Activated CD4-positive, alpha-beta T cell treated with anti-CD3 and anti-CD28 coated beads, Interleukin-2, amount 10 ng/mL, durations not matched to agents 7 days and 5 days (primary cell): ENCODE measurements at regions of chr9 and their contacts with region 1.

Region 1: GRCh38 chr9:128887914-128888350 is 6.0 kb downstream of the LRRC8A start:
- DNase-seq: no peak
- H3K4me3 Mint-ChIP-seq: no peak overlapping the region
- H3K27ac Mint-ChIP-seq: no peak overlapping the region
- H3K4me1 Mint-ChIP-seq: peaks cover 71% of the 10 kb centered on the region
- H3K27me3 Mint-ChIP-seq: no peaks in the 10 kb centered on the region

Region 2: DNA sequence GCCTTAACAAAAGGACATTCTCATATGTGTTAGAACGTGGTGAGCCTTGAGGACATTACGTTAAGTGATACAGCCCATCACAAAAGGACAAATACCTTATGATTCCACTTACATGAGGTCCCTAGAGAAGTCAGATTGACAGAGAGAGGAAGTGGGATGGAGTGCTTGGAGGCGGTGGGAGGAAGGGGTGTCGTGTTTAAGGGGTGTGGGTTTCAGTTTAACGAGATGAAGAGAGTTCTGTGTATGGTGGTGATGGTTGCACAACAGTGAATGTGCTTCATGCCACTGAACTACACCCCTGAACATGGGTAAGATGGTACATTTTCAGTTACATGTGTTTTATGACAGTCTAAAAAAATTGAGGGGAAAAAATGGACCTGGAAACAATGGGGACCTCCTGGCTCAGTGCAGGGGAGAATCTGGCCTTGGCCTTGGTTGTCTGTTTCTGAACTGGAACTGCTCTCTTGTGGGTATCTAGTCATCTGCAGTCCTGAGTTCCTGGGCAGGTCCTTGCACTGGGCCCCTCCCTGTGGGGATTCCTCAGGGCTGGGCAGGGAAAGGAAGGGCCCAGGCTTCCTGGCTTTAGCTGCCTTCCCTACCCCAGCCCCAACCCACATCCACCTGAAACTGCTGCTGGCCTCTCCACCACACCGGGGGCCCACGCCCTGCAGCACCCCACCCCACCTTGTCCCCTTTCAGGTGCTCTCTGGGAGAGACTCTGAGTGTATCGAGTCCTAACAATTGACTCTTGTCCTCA is 11.8 kb after region 1 on chr9:
- CTCF ChIA-PET with region 1: interaction called, 12 read pairs
- POLR2A ChIA-PET with region 1: interaction called, 3 read pairs
- DNase-seq: peak; percentile 47
- H3K4me3 Mint-ChIP-seq: peak overlapping the region; percentile 58
- H3K27ac Mint-ChIP-seq: peak overlapping the region; percentile 97
- H3K4me1 Mint-ChIP-seq: peaks cover 93% of the 10 kb centered on the region
- H3K27me3 Mint-ChIP-seq: no peaks in the 10 kb centered on the region

Region 3: GRCh38 chr9:128940271-128940921 is 52.5 kb after region 1 on chr9:
- CTCF ChIA-PET with region 1: no interaction called
- POLR2A ChIA-PET with region 1: no interaction called
- DNase-seq: no peak
- H3K4me3 Mint-ChIP-seq: no peak overlapping the region
- H3K27ac Mint-ChIP-seq: no peak overlapping the region
- H3K4me1 Mint-ChIP-seq: no peaks in the 10 kb centered on the region
- H3K27me3 Mint-ChIP-seq: no peaks in the 10 kb centered on the region